ENCODE measurements at regions of chr3 and their contacts with region 1.

Region 1: GRCh38 chr3:71360764-71361163 is 222.8 kb downstream of the FOXP1 start:
- DNase-seq: peak; percentile 43
- H3K4me3 Mint-ChIP-seq: peak overlapping the region; percentile 48
- H3K27ac Mint-ChIP-seq: peak overlapping the region; percentile 70
- H3K4me1 Mint-ChIP-seq: peaks cover 82% of the 10 kb centered on the region
- H3K27me3 Mint-ChIP-seq: no peaks in the 10 kb centered on the region

Region 2: GRCh38 chr3:70856414-70857162 is 504.2 kb before region 1 on chr3:
- CTCF ChIA-PET with region 1: no interaction called
- intact Hi-C with region 1: loop called (anchors 5 kb)
- DNase-seq: peak; percentile 10
- H3K4me3 Mint-ChIP-seq: no peak overlapping the region
- H3K27ac Mint-ChIP-seq: no peak overlapping the region
- H3K4me1 Mint-ChIP-seq: peaks cover 28% of the 10 kb centered on the region
- H3K27me3 Mint-ChIP-seq: peaks cover 23% of the 10 kb centered on the region

Region 3: GRCh38 chr3:71172951-71173350 is 187.8 kb before region 1 on chr3:
- CTCF ChIA-PET with region 1: no interaction called
- intact Hi-C with region 1: no loop called
- DNase-seq: no peak
- H3K4me3 Mint-ChIP-seq: no peak overlapping the region
- H3K27ac Mint-ChIP-seq: no peak overlapping the region
- H3K4me1 Mint-ChIP-seq: peaks cover 68% of the 10 kb centered on the region
- H3K27me3 Mint-ChIP-seq: no peaks in the 10 kb centered on the region

Region 4: DNA sequence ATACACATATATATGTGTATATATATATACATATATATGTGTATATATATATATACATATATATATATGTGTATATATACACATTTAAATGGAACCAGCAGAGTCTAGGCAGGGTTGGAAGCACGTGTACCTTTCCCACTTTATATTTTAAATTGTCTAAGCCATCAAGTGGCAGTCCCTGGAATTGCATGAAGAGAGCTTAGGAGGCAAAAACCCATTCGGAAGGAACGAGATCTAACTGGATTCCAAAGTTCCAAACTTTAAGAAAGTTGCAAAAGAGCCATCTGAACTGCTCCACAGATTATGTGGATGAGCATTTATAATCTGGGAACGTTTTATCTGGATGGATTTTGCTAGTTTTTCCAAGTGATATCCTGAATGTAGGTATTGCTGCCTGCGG is 36.3 kb after region 1 on chr3:
- CTCF ChIA-PET with region 1: interaction called, 19 read pairs
- intact Hi-C with region 1: loop called (anchors 1 kb)
- DNase-seq: peak; percentile 35
- H3K4me3 Mint-ChIP-seq: peak overlapping the region; percentile 5
- H3K27ac Mint-ChIP-seq: no peak overlapping the region
- H3K4me1 Mint-ChIP-seq: peaks cover 81% of the 10 kb centered on the region
- H3K27me3 Mint-ChIP-seq: no peaks in the 10 kb centered on the region

Region 5: GRCh38 chr3:71489315-71489761 is 128.6 kb after region 1 on chr3:
- CTCF ChIA-PET with region 1: no interaction called
- intact Hi-C with region 1: loop called (anchors 1 kb)
- DNase-seq: peak; percentile 35
- H3K4me3 Mint-ChIP-seq: peak overlapping the region; percentile 67
- H3K27ac Mint-ChIP-seq: peak overlapping the region; percentile 88
- H3K4me1 Mint-ChIP-seq: peaks cover 88% of the 10 kb centered on the region
- H3K27me3 Mint-ChIP-seq: no peaks in the 10 kb centered on the region